ENCODE measurements at regions of chr1 and their contacts with region 1.

Region 1: GRCh38 chr1:204516180-204516879 is at the start of gene MDM4:
- DNase-seq: peak; percentile 98
- H3K4me3 ChIP-seq: peak within 1 kb of the TSS; percentile 88
- H3K27ac ChIP-seq: peak within 1 kb of the TSS; percentile 100
- H3K4me1 ChIP-seq: peaks cover 85% of the 10 kb centered on the region
- CTCF ChIP-seq: no peak
- total RNA-seq, gene MDM4: 102 and 120 TPM in 2 replicates

Region 2: GRCh38 chr1:203290261-203291089 is 1225.9 kb before region 1 on chr1:
- CTCF ChIA-PET with region 1: no interaction called
- POLR2A ChIA-PET with region 1: interaction called, 3 read pairs
- intact Hi-C with region 1: loop called (anchors 5 kb)
- DNase-seq: peak; percentile 96
- H3K4me3 ChIP-seq: peak overlapping the region; percentile 63
- H3K27ac ChIP-seq: peak overlapping the region; percentile 99
- H3K4me1 ChIP-seq: peaks cover 99% of the 10 kb centered on the region
- CTCF ChIP-seq: 0 out of 2 replicates have a peak, but pooled peaks have one; percentile 17

Region 3: DNA sequence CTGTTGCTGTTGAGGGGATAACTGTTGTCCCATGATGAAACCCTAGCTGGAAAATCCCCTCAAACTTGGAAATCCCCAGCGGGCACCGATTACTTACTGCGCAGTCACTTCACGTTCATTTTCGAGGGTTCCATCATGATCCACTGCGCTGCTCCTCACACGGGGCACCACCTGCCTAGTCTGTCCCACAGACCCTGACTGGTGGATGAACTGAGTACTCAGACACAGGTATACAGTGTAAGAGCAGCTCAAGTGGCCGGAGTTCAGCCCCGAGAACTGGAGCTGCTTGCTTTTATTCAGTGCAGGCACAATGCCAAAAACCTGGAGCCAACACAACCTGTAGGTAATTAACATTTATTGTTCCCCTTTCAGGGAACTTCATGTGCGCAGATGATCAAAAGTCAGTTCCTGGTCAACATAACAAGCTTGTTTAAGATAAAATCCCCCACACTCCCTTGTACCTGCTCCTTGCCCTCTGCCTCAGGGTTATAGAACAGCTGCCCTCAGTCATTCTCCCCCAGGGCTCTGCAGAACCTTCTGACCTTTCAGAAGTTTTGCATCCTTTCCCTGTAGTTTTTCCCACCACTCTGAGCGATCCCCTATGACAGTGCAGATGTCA is 1087.2 kb before region 1 on chr1:
- CTCF ChIA-PET with region 1: no interaction called
- POLR2A ChIA-PET with region 1: no interaction called
- intact Hi-C with region 1: no loop called
- DNase-seq: no peak
- H3K4me3 ChIP-seq: no peak overlapping the region
- H3K27ac ChIP-seq: no peak overlapping the region
- H3K4me1 ChIP-seq: peaks cover 10% of the 10 kb centered on the region
- CTCF ChIP-seq: no peak

Region 4: GRCh38 chr1:203930331-203930730 is 586.0 kb before region 1 on chr1:
- CTCF ChIA-PET with region 1: no interaction called
- POLR2A ChIA-PET with region 1: interaction called, 4 read pairs
- intact Hi-C with region 1: loop called (anchors 10 kb)
- DNase-seq: no peak
- H3K4me3 ChIP-seq: no peak overlapping the region
- H3K27ac ChIP-seq: no peak overlapping the region
- H3K4me1 ChIP-seq: peaks cover 37% of the 10 kb centered on the region
- CTCF ChIP-seq: no peak

Region 5: DNA sequence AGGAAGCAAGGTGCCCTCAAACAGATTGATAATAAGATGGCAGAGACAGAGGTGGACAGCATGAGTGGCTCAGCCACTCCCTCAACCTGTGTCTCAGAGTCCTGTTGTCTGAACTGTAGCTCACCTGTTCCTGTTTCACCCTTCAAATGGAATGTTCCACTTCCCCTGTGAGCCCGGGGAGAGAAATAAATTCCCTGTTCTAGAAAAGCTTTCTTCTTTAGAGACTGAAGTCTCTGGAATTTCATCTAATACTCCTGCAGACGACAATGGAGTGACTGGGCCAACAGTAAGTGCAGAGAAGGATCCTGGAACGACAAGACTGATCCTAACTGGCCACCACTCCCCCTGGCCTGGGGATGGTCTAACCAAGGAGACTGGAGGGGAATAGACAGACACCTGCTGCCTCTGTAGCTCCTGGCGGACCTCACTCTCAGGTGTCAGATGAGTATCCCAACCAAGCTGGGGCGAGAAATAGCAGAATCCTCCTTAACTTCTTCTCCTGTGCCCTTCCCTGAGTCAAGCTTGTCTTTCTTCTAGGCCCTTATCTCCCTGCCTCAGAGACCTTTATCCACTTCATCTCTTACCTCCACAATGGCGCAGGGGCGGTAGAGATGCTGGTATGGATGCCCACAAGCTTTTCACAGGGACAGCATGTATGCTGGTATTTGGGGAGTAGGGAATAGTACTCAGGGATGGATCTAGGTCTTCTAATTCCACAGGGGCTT is 202.0 kb before region 1 on chr1:
- CTCF ChIA-PET with region 1: no interaction called
- POLR2A ChIA-PET with region 1: no interaction called
- intact Hi-C with region 1: no loop called
- DNase-seq: peak; percentile 26
- H3K4me3 ChIP-seq: no peak overlapping the region
- H3K27ac ChIP-seq: no peak overlapping the region
- H3K4me1 ChIP-seq: no peaks in the 10 kb centered on the region
- CTCF ChIP-seq: no peak

Region 6: DNA sequence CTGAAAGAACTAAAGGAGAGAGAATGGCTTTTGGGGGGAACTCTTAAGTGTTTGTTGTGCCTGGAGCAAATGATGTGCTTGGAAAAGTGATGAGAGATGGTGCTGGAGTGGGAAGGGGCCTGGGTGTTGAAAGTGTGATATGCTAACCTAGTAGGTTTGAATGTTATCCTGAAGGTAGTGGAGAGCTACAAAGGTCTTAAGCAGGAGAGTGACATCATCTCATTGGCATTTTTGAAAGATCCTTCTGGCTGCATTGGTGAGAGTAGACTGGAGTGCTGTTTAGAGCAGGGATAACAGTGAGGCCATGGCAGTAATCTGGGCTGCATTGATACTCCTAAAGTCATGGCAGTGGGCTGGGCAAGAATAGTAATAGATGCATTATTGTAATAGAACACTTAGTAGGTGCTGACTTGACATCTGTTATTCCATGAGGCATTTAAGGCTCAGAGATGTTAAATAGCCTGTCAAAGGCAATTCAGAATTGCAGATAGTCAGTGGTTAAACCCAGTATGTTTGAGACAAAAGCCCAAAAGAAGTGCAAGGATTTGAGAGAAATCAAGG is 44.3 kb after region 1 on chr1:
- CTCF ChIA-PET with region 1: no interaction called
- POLR2A ChIA-PET with region 1: interaction called, 37 read pairs
- intact Hi-C with region 1: loop called (anchors 2 kb)
- DNase-seq: no peak
- H3K4me3 ChIP-seq: no peak overlapping the region
- H3K27ac ChIP-seq: peak overlapping the region; percentile 63
- H3K4me1 ChIP-seq: peaks cover 78% of the 10 kb centered on the region
- CTCF ChIP-seq: no peak

Region 7: GRCh38 chr1:204572931-204573891 is 56.9 kb after region 1 on chr1:
- CTCF ChIA-PET with region 1: interaction called, 12 read pairs
- POLR2A ChIA-PET with region 1: no interaction called
- intact Hi-C with region 1: no loop called
- DNase-seq: no peak
- H3K4me3 ChIP-seq: no peak overlapping the region
- H3K27ac ChIP-seq: no peak overlapping the region
- H3K4me1 ChIP-seq: peaks cover 6% of the 10 kb centered on the region
- CTCF ChIP-seq: no peak

Region 8: GRCh38 chr1:204623894-204624361 is 107.6 kb after region 1 on chr1:
- CTCF ChIA-PET with region 1: no interaction called
- POLR2A ChIA-PET with region 1: no interaction called
- intact Hi-C with region 1: no loop called
- DNase-seq: peak; percentile 57
- H3K4me3 ChIP-seq: no peak overlapping the region
- H3K27ac ChIP-seq: no peak overlapping the region
- H3K4me1 ChIP-seq: no peaks in the 10 kb centered on the region
- CTCF ChIP-seq: peak; percentile 60

Region 9: GRCh38 chr1:205313563-205314308 is 797.4 kb after region 1 on chr1:
- CTCF ChIA-PET with region 1: no interaction called
- POLR2A ChIA-PET with region 1: no interaction called
- intact Hi-C with region 1: loop called (anchors 10 kb)
- DNase-seq: peak; percentile 76
- H3K4me3 ChIP-seq: peak overlapping the region; percentile 60
- H3K27ac ChIP-seq: peak overlapping the region; percentile 66
- H3K4me1 ChIP-seq: peaks cover 83% of the 10 kb centered on the region
- CTCF ChIP-seq: no peak

Measured in OCI-LY7 (cell line).